IMR-90 (cell line): ENCODE measurements at regions of chr2 and their contacts with region 1.

Region 1: GRCh38 chr2:194725169-194725568 is 931.9 kb upstream of the SLC39A10 start:
- DNase-seq: no peak
- ATAC-seq: no peak
- H3K4me3 ChIP-seq: no peak overlapping the region
- H3K27ac ChIP-seq: no peak overlapping the region
- H3K4me1 ChIP-seq: no peaks in the 10 kb centered on the region
- H3K27me3 ChIP-seq: no peaks in the 10 kb centered on the region
- CTCF ChIP-seq: no peak
- POLR2A ChIP-seq: no peak
- RAD21 ChIP-seq: no peak

Region 2: DNA sequence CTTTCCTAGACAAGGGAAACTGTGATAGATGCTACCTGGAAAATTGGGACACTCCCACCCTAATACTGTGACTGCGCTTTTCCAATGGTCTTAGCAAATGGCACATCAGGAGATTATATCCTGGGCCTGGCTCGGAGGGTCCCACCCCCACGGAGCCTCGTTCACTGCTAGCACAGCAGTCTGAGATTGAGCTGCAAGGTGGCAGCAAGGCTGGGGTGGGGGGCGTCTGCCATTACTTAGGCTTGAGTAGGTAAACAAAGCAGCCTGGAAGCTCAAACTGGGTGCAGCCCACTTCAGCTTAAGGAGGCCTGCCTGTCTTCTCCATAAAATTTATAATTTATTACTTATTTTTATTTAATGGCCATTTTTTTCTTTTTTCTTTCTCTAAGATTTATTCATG is 129.8 kb after region 1 on chr2:
- CTCF ChIA-PET with region 1: no interaction called
- POLR2A ChIA-PET with region 1: no interaction called
- dilution Hi-C with region 1: no loop called
- in situ Hi-C with region 1: no loop called
- intact Hi-C with region 1: no loop called
- DNase-seq: no peak
- ATAC-seq: no peak
- H3K4me3 ChIP-seq: no peak overlapping the region
- H3K27ac ChIP-seq: no peak overlapping the region
- H3K4me1 ChIP-seq: no peaks in the 10 kb centered on the region
- H3K27me3 ChIP-seq: no peaks in the 10 kb centered on the region
- CTCF ChIP-seq: no peak
- POLR2A ChIP-seq: no peak
- RAD21 ChIP-seq: no peak

Region 3: DNA sequence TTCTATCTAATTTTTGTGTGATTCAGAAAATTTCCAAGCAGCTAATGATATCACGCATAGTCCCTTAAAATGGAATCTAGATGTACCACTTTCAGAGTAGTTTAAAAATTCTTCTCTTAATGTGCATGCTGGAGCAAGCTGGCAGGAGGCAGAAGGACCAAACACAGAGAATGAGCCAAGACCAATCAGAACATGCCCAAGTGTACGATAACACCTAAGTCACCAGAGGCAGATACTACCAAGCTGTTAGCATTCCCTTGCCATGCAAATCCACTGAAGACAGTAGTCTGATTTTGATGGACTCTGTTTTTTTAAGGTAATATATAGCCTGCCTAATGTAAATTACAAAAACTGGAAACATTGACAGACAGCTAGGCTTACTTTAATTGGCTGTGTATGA is 1234.2 kb after region 1 on chr2:
- CTCF ChIA-PET with region 1: no interaction called
- POLR2A ChIA-PET with region 1: no interaction called
- dilution Hi-C with region 1: no loop called
- in situ Hi-C with region 1: no loop called
- intact Hi-C with region 1: loop called (anchors 5 kb)
- DNase-seq: no peak
- ATAC-seq: no peak
- H3K4me3 ChIP-seq: no peak overlapping the region
- H3K27ac ChIP-seq: no peak overlapping the region
- H3K4me1 ChIP-seq: no peaks in the 10 kb centered on the region
- H3K27me3 ChIP-seq: no peaks in the 10 kb centered on the region; the same call in 1 of the 2 replicates
- CTCF ChIP-seq: no peak
- POLR2A ChIP-seq: no peak
- RAD21 ChIP-seq: no peak